Heart right ventricle (tissue), 16 donors: ENCODE measurements at regions of chr11 and their contacts with region 1.

Region 1: DNA sequence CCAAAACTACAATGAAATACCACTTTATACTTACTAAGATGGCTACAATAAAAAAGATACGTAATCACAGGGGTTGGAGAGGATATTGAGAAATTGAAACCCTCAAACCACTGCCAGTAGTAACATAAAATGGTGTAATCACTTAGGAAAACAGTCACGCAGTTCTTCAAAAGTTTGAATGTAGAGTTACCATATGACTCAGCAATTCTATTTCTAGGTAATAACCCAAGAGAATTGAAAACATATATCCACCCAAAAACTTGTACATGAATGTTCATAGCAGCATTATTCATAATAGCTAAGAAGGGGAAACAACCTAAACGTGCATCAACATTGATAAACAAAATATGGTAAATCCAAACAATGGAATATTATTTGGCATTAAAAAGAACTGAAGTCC is 24.4 kb upstream of the PSMA1 start:
- DNase-seq: no peak
- ATAC-seq: no peak
- H3K4me3 ChIP-seq: no peak overlapping the region
- H3K27ac ChIP-seq: no peak overlapping the region
- H3K4me1 ChIP-seq: peaks cover 0 to 57% (median 20%) of the 10 kb centered on the region in 9 donors
- H3K27me3 ChIP-seq: no peaks in the 10 kb centered on the region
- CTCF ChIP-seq: no peak

Region 2: DNA sequence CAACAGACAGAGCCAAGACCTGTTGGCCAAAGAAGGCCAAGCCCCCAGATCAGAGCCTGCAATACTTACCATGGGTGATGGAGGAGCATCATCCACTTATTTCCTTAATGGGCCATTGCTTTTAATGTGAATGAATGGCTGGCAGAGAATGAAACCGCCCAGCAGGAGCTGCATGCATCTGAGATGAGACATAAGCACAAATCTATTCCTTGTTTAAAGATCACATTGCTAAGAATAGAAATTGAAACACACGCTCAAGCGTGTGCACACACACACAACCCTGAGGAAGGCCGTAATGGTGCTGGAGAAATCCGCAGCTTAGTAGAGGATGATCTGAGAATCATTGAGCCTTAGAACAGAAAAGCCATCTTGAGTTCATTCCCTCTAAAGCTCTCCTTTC is 180.3 kb before region 1 on chr11:
- intact Hi-C with region 1: no loop called
- DNase-seq: peak in 1 of 2 donors; percentile 10
- ATAC-seq: peak in 6 of 8 donors; percentile 36 to 90 (median 70)
- H3K4me3 ChIP-seq: no peak overlapping the region
- H3K27ac ChIP-seq: peak overlapping the region in 4 of 10 donors; percentile 56 to 82 (median 74)
- H3K4me1 ChIP-seq: peaks cover 0 to 33% (median 4%) of the 10 kb centered on the region in 9 donors
- H3K27me3 ChIP-seq: peaks cover 0 to 10% (median 0%) of the 10 kb centered on the region in 7 donors
- CTCF ChIP-seq: no peak

Region 3: GRCh38 chr11:14499554-14500180 is 44.9 kb before region 1 on chr11 and contains the start of gene COPB1:
- intact Hi-C with region 1: no loop called
- DNase-seq: peak; percentile 89 to 96
- ATAC-seq: peak; percentile 99 to 100 (median 99)
- H3K4me3 ChIP-seq: peak within 1 kb of the TSS; percentile 72 to 84 (median 78)
- H3K27ac ChIP-seq: peak within 1 kb of the TSS; percentile 67 to 94 (median 91)
- H3K4me1 ChIP-seq: peaks cover 0 to 53% (median 30%) of the 10 kb centered on the region in 9 donors
- H3K27me3 ChIP-seq: no peaks in the 10 kb centered on the region
- CTCF ChIP-seq: no peak
- total RNA-seq, gene COPB1: 40.2 to 60.0 (median 47.9) TPM

Region 4: DNA sequence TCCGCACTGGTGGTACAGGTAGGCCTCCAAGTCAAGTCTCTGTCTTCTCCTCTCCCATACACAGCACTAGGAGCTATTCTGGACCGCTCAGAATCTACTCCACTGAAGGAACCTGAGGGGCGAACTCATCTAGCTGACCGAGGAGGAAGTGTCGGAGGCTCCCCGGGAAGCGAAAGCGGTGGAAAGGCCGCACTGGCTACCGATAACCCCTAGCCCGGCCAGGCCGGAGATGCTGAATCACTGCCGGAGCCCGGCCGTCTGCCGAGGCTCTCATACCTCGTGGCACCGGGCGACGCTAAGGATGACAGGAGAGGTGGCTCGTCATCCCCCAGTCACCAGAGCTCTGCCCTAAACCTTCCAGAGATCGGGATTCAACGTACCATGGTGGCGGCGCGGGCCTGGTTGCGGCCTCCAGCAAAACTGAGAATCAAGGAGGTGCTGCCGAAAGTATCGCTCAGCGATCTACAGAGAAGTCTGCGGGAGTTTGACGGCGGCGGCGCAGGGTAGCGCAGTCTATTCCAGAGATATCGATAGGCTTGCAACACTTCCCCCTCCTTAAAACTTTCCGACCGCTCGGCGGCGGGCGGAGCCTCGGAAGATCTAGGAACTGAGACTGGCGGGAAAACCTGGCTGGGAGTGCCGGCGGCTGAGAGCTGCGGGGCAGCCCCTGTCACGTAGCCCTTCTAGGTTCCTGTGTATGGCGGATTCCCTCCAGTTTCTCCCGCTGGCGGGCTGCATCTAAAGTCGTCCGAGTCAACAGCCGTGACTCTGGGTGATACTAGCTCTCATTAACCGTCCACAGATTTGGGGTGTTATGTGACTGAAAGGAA is 24.5 kb before region 1 on chr11 and contains the start of gene PSMA1:
- intact Hi-C with region 1: no loop called
- DNase-seq: peak; percentile 92 to 94
- ATAC-seq: peak; percentile 98 to 99 (median 99)
- H3K4me3 ChIP-seq: peak within 1 kb of the TSS; percentile 63 to 98 (median 82)
- H3K27ac ChIP-seq: peak within 1 kb of the TSS; percentile 66 to 96 (median 92)
- H3K4me1 ChIP-seq: peaks cover 0 to 31% (median 19%) of the 10 kb centered on the region in 9 donors
- H3K27me3 ChIP-seq: no peaks in the 10 kb centered on the region
- CTCF ChIP-seq: peak; percentile 25 to 58 (median 42)
- total RNA-seq, gene PSMA1: 117 to 147 (median 124) TPM

Region 5: DNA sequence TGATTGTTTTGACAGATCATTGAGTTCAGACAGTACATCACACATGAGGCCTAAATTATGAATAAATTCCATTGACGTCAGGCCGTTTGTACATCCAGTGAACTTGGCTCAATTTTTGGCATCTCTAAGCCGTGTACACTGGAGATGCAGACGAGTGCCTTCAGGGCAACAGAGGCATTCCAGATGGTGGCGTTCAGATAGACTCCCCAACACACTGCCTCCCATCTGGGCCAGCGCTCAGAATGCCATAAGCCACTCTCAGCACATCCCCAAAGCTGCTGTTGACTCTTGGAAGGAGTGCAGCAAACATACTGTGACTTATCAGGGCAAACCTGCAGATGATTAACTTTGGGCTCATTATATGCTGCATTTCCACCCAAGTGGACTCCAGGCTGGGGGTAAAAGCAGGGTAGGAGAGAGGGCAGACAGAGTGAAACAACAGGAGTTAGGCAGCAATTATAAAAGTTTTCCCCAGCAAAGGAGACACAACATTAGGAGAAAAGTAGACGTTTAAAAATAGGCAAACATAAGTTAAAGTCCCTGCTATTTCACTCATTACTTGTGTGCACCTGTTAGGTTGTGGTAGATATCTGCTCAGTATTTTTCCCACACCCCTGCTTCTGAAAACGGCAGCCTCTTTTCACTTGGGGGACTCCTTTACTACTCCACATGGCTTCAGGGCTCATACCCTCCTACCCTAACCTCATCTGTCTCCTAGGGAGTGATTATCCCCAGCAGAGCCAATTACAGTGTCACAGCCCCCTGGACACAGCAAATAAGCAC is 38.8 kb after region 1 on chr11:
- intact Hi-C with region 1: loop called in 1 of 10 experiments (anchors 5 kb)
- DNase-seq: peak; percentile 29 to 34
- ATAC-seq: peak in 7 of 8 donors; percentile 53 to 80 (median 73)
- H3K4me3 ChIP-seq: no peak overlapping the region
- H3K27ac ChIP-seq: peak overlapping the region in 4 of 10 donors; percentile 11 to 54 (median 32)
- H3K4me1 ChIP-seq: peaks cover 0 to 20% (median 7%) of the 10 kb centered on the region in 9 donors
- H3K27me3 ChIP-seq: no peaks in the 10 kb centered on the region
- CTCF ChIP-seq: no peak

Region 6: GRCh38 chr11:14619603-14620531 is 75.3 kb after region 1 on chr11:
- intact Hi-C with region 1: no loop called
- DNase-seq: no peak
- ATAC-seq: peak in 2 of 8 donors; percentile 39 to 41
- H3K4me3 ChIP-seq: no peak overlapping the region
- H3K27ac ChIP-seq: no peak overlapping the region
- H3K4me1 ChIP-seq: peaks cover 0 to 9% (median 0%) of the 10 kb centered on the region in 9 donors
- H3K27me3 ChIP-seq: no peaks in the 10 kb centered on the region
- CTCF ChIP-seq: no peak

Region 7: GRCh38 chr11:14764579-14765527 is 220.2 kb after region 1 on chr11:
- intact Hi-C with region 1: loop called in 1 of 10 experiments (anchors 10 kb)
- DNase-seq: no peak
- ATAC-seq: peak in 1 of 8 donors; percentile 37
- H3K4me3 ChIP-seq: no peak overlapping the region
- H3K27ac ChIP-seq: no peak overlapping the region
- H3K4me1 ChIP-seq: peaks cover 0 to 16% (median 0%) of the 10 kb centered on the region in 9 donors
- H3K27me3 ChIP-seq: no peaks in the 10 kb centered on the region
- CTCF ChIP-seq: no peak

Region 8: GRCh38 chr11:14886513-14886912 is 341.9 kb after region 1 on chr11:
- intact Hi-C with region 1: loop called in 2 of 10 experiments (anchors 5 kb)
- DNase-seq: no peak
- ATAC-seq: no peak
- H3K4me3 ChIP-seq: no peak overlapping the region
- H3K27ac ChIP-seq: no peak overlapping the region
- H3K4me1 ChIP-seq: peaks cover 0 to 21% (median 10%) of the 10 kb centered on the region in 9 donors
- H3K27me3 ChIP-seq: no peaks in the 10 kb centered on the region
- CTCF ChIP-seq: no peak